WTC11 (cell line): ENCODE measurements at regions of chr14 and their contacts with region 1.

Region 1: GRCh38 chr14:23454445-23454856 is 15.1 kb upstream of the NGDN start:
- DNase-seq: no peak
- ATAC-seq: no peak
- H3K4me3 Mint-ChIP-seq: no peak overlapping the region
- H3K27ac Mint-ChIP-seq: no peak overlapping the region
- H3K4me1 Mint-ChIP-seq: peaks cover 2% of the 10 kb centered on the region
- H3K27me3 Mint-ChIP-seq: peaks cover 5% of the 10 kb centered on the region; the same call in 1 of the 2 replicates
- CTCF ChIP-seq: no peak

Region 2: GRCh38 chr14:23327947-23328744 is 126.3 kb before region 1 on chr14:
- CTCF ChIA-PET with region 1: interaction called, 10 read pairs
- POLR2A ChIA-PET with region 1: no interaction called
- DNase-seq: peak; percentile 72
- ATAC-seq: peak; percentile 70
- H3K4me3 Mint-ChIP-seq: no peak overlapping the region
- H3K27ac Mint-ChIP-seq: no peak overlapping the region
- H3K4me1 Mint-ChIP-seq: peaks cover 3% of the 10 kb centered on the region
- H3K27me3 Mint-ChIP-seq: no peaks in the 10 kb centered on the region; the same call in 1 of the 2 replicates
- CTCF ChIP-seq: peak; percentile 76

Region 3: GRCh38 chr14:23385642-23386265 is 68.7 kb before region 1 on chr14:
- CTCF ChIA-PET with region 1: interaction called, 24 read pairs
- POLR2A ChIA-PET with region 1: no interaction called
- DNase-seq: no peak
- ATAC-seq: peak; percentile 43; the same call in 1 of the 2 replicates
- H3K4me3 Mint-ChIP-seq: no peak overlapping the region
- H3K27ac Mint-ChIP-seq: no peak overlapping the region
- H3K4me1 Mint-ChIP-seq: peaks cover 11% of the 10 kb centered on the region
- H3K27me3 Mint-ChIP-seq: peaks cover 38% of the 10 kb centered on the region
- CTCF ChIP-seq: no peak

Region 4: GRCh38 chr14:23434488-23435222 is 19.8 kb before region 1 on chr14:
- CTCF ChIA-PET with region 1: interaction called, 19 read pairs
- POLR2A ChIA-PET with region 1: no interaction called
- DNase-seq: no peak
- ATAC-seq: no peak
- H3K4me3 Mint-ChIP-seq: no peak overlapping the region
- H3K27ac Mint-ChIP-seq: no peak overlapping the region
- H3K4me1 Mint-ChIP-seq: peaks cover 14% of the 10 kb centered on the region
- H3K27me3 Mint-ChIP-seq: peaks cover 31% of the 10 kb centered on the region
- CTCF ChIP-seq: no peak

Region 5: GRCh38 chr14:23468704-23469126 is 14.3 kb after region 1 on chr14:
- CTCF ChIA-PET with region 1: interaction called, 11 read pairs
- POLR2A ChIA-PET with region 1: no interaction called
- DNase-seq: no peak
- ATAC-seq: peak; percentile 1; the same call in 1 of the 2 replicates
- H3K4me3 Mint-ChIP-seq: no peak overlapping the region
- H3K27ac Mint-ChIP-seq: no peak overlapping the region
- H3K4me1 Mint-ChIP-seq: peaks cover 8% of the 10 kb centered on the region
- H3K27me3 Mint-ChIP-seq: peaks cover 30% of the 10 kb centered on the region
- CTCF ChIP-seq: no peak

Region 6: GRCh38 chr14:23512156-23512555 is 57.7 kb after region 1 on chr14:
- CTCF ChIA-PET with region 1: no interaction called
- POLR2A ChIA-PET with region 1: no interaction called
- DNase-seq: no peak
- ATAC-seq: no peak
- H3K4me3 Mint-ChIP-seq: no peak overlapping the region
- H3K27ac Mint-ChIP-seq: no peak overlapping the region
- H3K4me1 Mint-ChIP-seq: peaks cover 8% of the 10 kb centered on the region
- H3K27me3 Mint-ChIP-seq: peaks cover 40% of the 10 kb centered on the region
- CTCF ChIP-seq: no peak

Region 7: GRCh38 chr14:23522643-23523198 is 68.3 kb after region 1 on chr14:
- CTCF ChIA-PET with region 1: no interaction called
- POLR2A ChIA-PET with region 1: no interaction called
- DNase-seq: no peak
- ATAC-seq: no peak
- H3K4me3 Mint-ChIP-seq: no peak overlapping the region
- H3K27ac Mint-ChIP-seq: no peak overlapping the region
- H3K4me1 Mint-ChIP-seq: peaks cover 68% of the 10 kb centered on the region
- H3K27me3 Mint-ChIP-seq: peaks cover 2% of the 10 kb centered on the region
- CTCF ChIP-seq: no peak

Region 8: GRCh38 chr14:23751616-23752015 is 297.2 kb after region 1 on chr14:
- CTCF ChIA-PET with region 1: no interaction called
- POLR2A ChIA-PET with region 1: no interaction called
- DNase-seq: no peak
- ATAC-seq: no peak
- H3K4me3 Mint-ChIP-seq: no peak overlapping the region
- H3K27ac Mint-ChIP-seq: no peak overlapping the region
- H3K4me1 Mint-ChIP-seq: no peaks in the 10 kb centered on the region
- H3K27me3 Mint-ChIP-seq: peaks cover 13% of the 10 kb centered on the region
- CTCF ChIP-seq: no peak